HCT116 (cell line): ENCODE measurements at regions of chr5 and their contacts with region 1.

Region 1: GRCh38 chr5:171913987-171914273 is 92.5 kb downstream of the FBXW11 start:
- DNase-seq: no peak
- ATAC-seq: no peak
- H3K4me3 ChIP-seq: no peak overlapping the region
- H3K27ac ChIP-seq: no peak overlapping the region
- H3K4me1 ChIP-seq: no peaks in the 10 kb centered on the region
- H3K27me3 ChIP-seq: no peaks in the 10 kb centered on the region
- CTCF ChIP-seq: no peak
- POLR2A ChIP-seq: no peak
- RAD21 ChIP-seq: no peak

Region 2: DNA sequence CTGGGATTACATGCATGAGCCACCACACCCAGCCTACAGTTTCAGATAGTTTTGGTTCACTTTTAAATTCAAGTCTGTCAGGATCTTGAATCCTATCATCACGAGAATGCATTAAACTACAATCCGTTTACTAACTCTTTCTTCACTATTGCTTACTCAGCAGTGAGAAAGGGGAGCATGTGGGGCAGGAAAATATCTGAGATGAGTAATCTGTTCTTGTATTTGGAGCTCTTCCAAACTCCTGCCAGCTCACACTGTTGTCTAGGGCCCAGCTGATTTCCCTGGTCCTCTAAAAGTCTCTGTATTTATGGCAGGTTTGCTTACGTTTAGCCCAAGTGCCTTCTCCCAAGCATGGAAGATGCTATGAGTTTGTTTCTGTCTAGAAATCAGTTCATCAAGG is 342.3 kb before region 1 on chr5:
- CTCF ChIA-PET with region 1: no interaction called
- POLR2A ChIA-PET with region 1: no interaction called
- RAD21 ChIA-PET with region 1: no interaction called
- intact Hi-C with region 1: no loop called
- DNase-seq: no peak
- ATAC-seq: no peak
- H3K4me3 ChIP-seq: no peak overlapping the region
- H3K27ac ChIP-seq: no peak overlapping the region
- H3K4me1 ChIP-seq: no peaks in the 10 kb centered on the region
- H3K27me3 ChIP-seq: no peaks in the 10 kb centered on the region
- CTCF ChIP-seq: no peak
- POLR2A ChIP-seq: no peak
- RAD21 ChIP-seq: no peak

Region 3: GRCh38 chr5:171968531-171968930 is 54.6 kb after region 1 on chr5:
- CTCF ChIA-PET with region 1: no interaction called
- POLR2A ChIA-PET with region 1: no interaction called
- RAD21 ChIA-PET with region 1: no interaction called
- intact Hi-C with region 1: no loop called
- DNase-seq: no peak
- ATAC-seq: no peak
- H3K4me3 ChIP-seq: no peak overlapping the region
- H3K27ac ChIP-seq: no peak overlapping the region
- H3K4me1 ChIP-seq: no peaks in the 10 kb centered on the region
- H3K27me3 ChIP-seq: no peaks in the 10 kb centered on the region
- CTCF ChIP-seq: no peak
- POLR2A ChIP-seq: no peak
- RAD21 ChIP-seq: no peak

Region 4: DNA sequence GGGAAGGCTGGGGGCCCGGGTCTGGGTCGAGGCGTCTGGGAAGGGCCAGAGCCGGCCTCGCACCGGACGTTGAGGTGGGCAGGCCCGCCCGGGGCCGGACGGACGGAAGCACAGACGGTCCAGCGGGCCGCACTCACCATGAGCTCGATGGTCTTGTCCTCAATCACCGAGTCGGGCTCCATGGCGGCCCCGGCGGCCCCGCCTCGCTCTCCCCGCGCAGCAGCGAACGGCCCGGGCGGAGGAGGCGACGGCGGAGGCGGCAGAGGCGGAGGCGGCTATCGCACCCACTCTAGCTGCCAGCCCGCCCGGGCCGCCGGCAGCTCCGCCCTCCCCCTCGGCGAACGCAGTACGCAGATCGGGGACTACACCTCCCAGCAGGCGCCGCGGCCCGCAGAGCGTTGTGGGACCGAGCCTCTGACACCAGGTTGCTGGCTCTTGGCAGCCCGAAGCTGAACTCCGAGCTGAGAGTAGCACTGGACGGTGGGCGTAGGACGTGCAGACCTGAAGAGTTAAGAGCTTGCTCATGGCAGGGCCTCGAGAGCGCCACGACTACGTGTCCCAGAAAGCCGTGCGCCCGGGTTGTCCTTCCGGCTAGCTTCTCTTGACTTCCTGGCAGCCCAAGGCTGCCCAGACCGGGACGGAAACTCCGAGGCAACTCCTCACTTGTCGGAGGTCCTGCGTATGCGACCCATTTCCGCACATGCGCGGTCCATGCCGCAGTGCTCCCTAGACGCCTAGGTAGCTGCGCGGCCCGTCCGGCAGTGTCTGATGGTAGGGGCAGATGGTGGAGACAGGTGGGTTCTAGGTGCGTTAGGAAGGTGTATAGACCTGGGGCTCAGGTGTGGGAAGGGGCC is 92.6 kb after region 1 on chr5 and contains the start of gene FBXW11:
- CTCF ChIA-PET with region 1: interaction called, 24 read pairs
- POLR2A ChIA-PET with region 1: interaction called, 3 read pairs
- RAD21 ChIA-PET with region 1: interaction called in 1 of 2 experiments, 3 read pairs
- intact Hi-C with region 1: no loop called
- DNase-seq: peak; percentile 95
- ATAC-seq: peak; percentile 90
- H3K4me3 ChIP-seq: peak within 1 kb of the TSS; percentile 78 to 99
- H3K27ac ChIP-seq: peak within 1 kb of the TSS; percentile 97
- H3K4me1 ChIP-seq: peaks cover 9 to 36% of the 10 kb centered on the region in 2 experiments; a peak in 3 of 4 replicates
- H3K27me3 ChIP-seq: no peaks in the 10 kb centered on the region
- CTCF ChIP-seq: no peak
- POLR2A ChIP-seq: peak; percentile 96
- RAD21 ChIP-seq: no peak
- total RNA-seq, gene FBXW11: 52.0 TPM

Region 5: DNA sequence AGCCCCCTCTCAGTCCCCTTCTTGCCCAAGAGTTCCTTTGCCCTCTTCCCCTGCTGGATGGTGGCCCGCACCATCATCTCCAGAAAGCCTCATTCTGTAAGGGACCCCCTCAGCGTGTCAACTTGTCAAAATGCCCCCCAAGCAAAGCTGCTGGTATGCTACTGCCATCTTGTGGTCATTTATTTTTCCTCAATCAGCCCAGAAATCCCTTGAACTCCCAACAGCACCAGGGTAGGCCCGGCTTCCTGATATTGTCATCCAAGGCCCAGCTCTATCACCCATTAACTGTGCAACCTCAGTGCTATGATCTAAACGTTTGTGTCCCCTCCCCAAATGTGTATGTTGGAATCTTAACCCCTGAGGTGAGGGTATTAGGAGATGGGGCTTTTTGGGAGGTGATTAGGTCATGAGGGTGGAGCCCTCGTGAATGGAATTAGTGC is 145.8 kb after region 1 on chr5:
- CTCF ChIA-PET with region 1: interaction called, 47 read pairs
- POLR2A ChIA-PET with region 1: no interaction called
- RAD21 ChIA-PET with region 1: interaction called in 1 of 2 experiments, 4 read pairs
- intact Hi-C with region 1: loop called (anchors 1 kb)
- DNase-seq: no peak
- ATAC-seq: peak; percentile 78
- H3K4me3 ChIP-seq: no peak overlapping the region
- H3K27ac ChIP-seq: no peak overlapping the region
- H3K4me1 ChIP-seq: no peaks in the 10 kb centered on the region
- H3K27me3 ChIP-seq: no peaks in the 10 kb centered on the region
- CTCF ChIP-seq: peak; percentile 42 to 72 (median 56); a peak in 5 of 6 replicates
- POLR2A ChIP-seq: no peak
- RAD21 ChIP-seq: peak; percentile 59

Region 6: DNA sequence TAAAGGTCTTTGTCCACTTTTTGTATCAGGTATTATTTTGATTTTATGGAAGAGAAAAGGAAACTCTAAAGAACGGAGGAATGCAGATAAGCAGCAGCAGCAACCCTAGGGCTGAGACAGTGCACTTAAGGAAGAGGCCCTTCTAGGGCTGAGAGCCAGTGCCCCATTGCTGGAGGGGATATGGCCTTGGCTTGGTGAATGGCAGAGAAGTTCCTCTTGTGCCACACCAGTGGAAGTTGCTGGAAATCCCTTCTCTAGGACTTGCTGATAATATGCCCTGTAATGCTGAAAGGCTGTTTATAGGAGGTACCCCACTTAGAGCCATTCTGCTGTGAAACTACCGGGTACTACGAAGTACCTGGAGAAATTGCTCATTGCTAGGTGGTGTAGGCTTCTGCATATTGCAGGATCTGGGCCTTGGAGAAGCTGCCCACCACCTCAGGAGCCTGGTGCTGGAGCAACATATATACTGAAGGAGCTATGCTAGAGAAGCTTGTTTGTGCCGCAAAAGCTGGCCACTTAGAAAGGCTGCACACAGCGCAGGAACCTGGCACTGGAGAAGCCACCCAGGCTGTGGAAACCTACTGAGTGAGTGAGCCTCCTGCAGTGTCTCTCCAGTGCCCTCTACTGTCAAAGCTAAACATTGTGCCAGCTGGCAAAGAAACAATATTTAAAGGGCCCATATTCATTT is 379.3 kb after region 1 on chr5:
- CTCF ChIA-PET with region 1: interaction called, 19 read pairs
- POLR2A ChIA-PET with region 1: no interaction called
- RAD21 ChIA-PET with region 1: no interaction called
- intact Hi-C with region 1: loop called (anchors 1 kb)
- DNase-seq: peak; percentile 63
- ATAC-seq: peak; percentile 97
- H3K4me3 ChIP-seq: no peak overlapping the region
- H3K27ac ChIP-seq: no peak overlapping the region
- H3K4me1 ChIP-seq: peaks cover 4 to 5% of the 10 kb centered on the region in 2 experiments; a peak in 2 of 4 replicates
- H3K27me3 ChIP-seq: no peaks in the 10 kb centered on the region
- CTCF ChIP-seq: peak; percentile 84 to 92 (median 92)
- POLR2A ChIP-seq: no peak
- RAD21 ChIP-seq: peak; percentile 96

Region 7: DNA sequence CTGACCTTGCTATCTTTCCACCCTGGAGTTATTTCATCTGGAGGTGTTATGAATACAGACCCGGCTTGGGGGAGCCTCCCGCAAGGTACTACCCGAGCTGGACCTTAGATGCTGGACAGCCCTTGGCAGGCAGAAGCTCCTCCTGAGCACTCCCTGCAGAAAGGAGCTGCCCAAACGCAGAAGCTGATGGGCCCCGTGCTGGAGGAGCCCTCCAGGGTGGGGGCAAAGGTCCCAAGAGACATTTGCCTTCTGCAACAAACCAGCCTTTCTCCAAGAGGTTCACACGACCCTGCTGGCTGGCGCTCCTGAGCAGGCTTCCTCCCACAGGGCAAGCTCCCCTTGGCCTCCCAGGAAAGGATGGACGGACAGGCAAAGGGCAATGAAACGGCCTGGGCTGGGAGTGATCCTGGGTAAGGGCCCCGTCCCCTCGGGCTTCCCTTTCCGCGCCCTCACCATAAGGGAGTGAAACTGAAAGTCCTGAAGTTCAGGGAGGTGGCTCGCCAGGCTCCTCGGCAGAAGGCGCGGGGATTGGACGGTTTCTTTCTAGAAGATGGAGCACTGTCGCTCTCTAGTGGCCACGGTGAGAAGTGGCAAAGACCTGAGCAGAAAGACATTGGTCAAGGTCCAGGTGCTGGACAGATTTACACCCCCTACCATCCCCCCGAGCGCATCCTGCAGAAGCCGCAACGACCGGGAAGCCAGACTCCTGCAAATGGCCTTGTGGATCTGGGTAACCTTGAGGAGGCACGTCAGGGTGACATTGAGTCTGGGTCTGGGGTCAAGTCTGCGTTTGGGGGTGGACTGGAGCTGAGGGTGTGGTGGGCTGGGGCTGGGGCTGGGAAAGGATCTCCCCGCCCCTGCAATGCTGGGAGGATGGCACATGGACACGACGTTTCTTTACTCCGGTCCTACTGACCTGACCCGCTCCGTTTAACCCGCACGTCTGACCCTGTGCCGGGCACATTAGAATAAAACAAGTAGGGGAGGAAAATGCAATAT is 783.5 kb after region 1 on chr5:
- CTCF ChIA-PET with region 1: interaction called, 6 read pairs
- POLR2A ChIA-PET with region 1: no interaction called
- RAD21 ChIA-PET with region 1: no interaction called
- intact Hi-C with region 1: loop called (anchors 10 kb)
- DNase-seq: peak; percentile 57
- ATAC-seq: peak; percentile 93
- H3K4me3 ChIP-seq: peak overlapping the region; percentile 50 to 60
- H3K27ac ChIP-seq: no peak overlapping the region
- H3K4me1 ChIP-seq: peaks cover 0 to 9% of the 10 kb centered on the region in 2 experiments; a peak in 2 of 4 replicates
- H3K27me3 ChIP-seq: no peaks in the 10 kb centered on the region
- CTCF ChIP-seq: peak; percentile 81 to 98 (median 89)
- POLR2A ChIP-seq: no peak
- RAD21 ChIP-seq: peak; percentile 100